A549 (cell line): ENCODE measurements at regions of chr2 and their contacts with region 1.

Region 1: GRCh38 chr2:1550658-1551316 is 137.5 kb downstream of the TPO start:
- DNase-seq: peak; percentile 46 to 75
- ATAC-seq: peak; percentile 71 to 93
- H3K4me3 ChIP-seq: no peak overlapping the region
- H3K27ac ChIP-seq: no peak overlapping the region
- H3K4me1 ChIP-seq: no peaks in the 10 kb centered on the region
- CTCF ChIP-seq: peak; percentile 88
- EP300 ChIP-seq: no peak
- POLR2A ChIP-seq: no peak
- RAD21 ChIP-seq: peak; percentile 62 to 67

Region 2: GRCh38 chr2:714005-714741 is 836.6 kb before region 1 on chr2:
- CTCF ChIA-PET with region 1: interaction called, 19 read pairs
- POLR2A ChIA-PET with region 1: no interaction called
- DNase-seq: peak; percentile 52 to 74
- ATAC-seq: peak; percentile 78 to 94
- H3K4me3 ChIP-seq: no peak overlapping the region
- H3K27ac ChIP-seq: no peak overlapping the region
- H3K4me1 ChIP-seq: no peaks in the 10 kb centered on the region
- CTCF ChIP-seq: peak; percentile 66
- EP300 ChIP-seq: no peak
- POLR2A ChIP-seq: no peak
- RAD21 ChIP-seq: peak; percentile 74 to 79

Region 3: DNA sequence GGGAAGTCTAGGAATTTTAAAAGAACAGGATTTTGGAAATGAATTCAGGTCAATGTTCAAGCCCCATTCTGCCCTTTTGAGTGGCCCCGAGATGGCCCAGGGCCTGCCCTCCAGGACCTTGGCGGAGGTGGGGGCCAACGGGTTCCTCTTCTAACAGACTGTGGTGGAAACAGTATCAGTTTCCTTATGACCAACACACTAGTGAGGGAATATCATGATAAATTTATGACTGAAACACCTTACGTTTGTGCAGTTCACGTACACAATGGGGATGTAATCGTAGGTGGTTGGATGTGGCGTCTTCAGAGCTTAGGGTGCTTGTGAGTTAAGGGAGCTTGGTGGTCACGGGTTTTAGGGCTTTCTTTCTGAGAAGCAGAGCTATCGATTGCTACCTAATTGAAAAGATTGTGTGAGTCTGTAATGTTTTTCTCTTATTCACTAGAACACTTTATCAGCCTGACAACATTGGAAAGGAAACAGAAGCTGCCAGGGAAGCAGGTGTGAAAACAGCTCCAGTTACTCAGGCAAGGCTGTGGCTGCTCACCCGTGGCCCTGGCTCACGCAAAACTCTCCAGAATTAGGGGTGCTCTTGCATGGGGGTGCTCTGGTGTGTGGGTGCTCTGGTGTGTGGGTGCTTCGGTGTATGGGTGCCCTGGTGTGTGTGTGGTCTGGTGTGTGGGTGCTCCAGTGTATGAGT is 434.8 kb before region 1 on chr2:
- CTCF ChIA-PET with region 1: no interaction called
- POLR2A ChIA-PET with region 1: no interaction called
- DNase-seq: no peak
- ATAC-seq: no peak
- H3K4me3 ChIP-seq: no peak overlapping the region
- H3K27ac ChIP-seq: no peak overlapping the region
- H3K4me1 ChIP-seq: no peaks in the 10 kb centered on the region
- CTCF ChIP-seq: no peak
- EP300 ChIP-seq: no peak
- POLR2A ChIP-seq: no peak
- RAD21 ChIP-seq: no peak

Region 4: DNA sequence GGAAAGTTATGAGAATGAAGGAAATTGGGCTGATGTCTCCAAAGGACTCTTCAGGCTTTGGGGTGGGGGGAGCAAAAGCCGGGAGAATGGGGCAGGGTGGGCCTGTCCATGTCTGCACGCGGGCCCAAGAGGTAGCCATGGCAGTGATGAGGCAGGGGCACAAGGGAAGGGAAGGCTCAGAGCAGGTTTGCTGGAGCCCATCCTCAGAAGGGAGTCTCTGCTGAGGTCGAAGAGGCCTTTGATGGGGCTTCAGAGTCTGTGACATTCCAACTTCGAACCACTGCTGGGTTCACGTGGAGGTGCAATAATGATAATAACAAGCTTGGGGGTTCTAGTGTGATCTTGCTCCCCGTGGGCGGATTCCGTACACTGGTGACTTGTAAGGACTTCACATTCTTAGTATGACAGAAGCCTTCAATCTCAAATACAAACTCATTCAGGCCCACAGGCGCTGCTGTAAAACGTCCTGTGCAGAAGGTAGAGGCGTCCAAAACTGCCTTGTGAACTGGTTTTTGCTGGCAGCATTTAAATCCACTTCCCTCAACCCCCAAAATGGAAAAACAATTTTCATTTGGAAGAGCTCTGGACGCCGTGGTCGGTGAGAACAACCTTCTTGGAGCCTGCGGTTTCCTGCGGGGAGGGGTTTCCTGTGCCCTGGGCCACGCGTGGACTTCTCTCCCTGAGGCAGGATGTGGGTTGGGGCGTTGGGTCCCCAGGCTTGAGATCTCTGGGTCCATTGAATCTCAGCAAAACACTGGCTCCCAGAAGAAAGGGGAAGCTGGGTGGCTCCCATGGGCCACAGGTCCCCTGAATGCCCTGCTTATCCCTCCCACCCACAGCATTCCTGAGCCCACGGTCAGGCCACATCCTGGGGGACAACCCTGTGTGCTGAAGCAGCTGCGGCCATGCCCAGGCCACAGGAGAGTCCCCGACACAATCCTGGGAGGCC is 13.4 kb after region 1 on chr2:
- CTCF ChIA-PET with region 1: interaction called, 26 read pairs
- POLR2A ChIA-PET with region 1: no interaction called
- DNase-seq: no peak
- ATAC-seq: no peak
- H3K4me3 ChIP-seq: no peak overlapping the region
- H3K27ac ChIP-seq: no peak overlapping the region
- H3K4me1 ChIP-seq: no peaks in the 10 kb centered on the region
- CTCF ChIP-seq: no peak
- EP300 ChIP-seq: no peak
- POLR2A ChIP-seq: no peak
- RAD21 ChIP-seq: no peak